ENCODE measurements at regions of chr13 and their contacts with region 1.

Region 1: DNA sequence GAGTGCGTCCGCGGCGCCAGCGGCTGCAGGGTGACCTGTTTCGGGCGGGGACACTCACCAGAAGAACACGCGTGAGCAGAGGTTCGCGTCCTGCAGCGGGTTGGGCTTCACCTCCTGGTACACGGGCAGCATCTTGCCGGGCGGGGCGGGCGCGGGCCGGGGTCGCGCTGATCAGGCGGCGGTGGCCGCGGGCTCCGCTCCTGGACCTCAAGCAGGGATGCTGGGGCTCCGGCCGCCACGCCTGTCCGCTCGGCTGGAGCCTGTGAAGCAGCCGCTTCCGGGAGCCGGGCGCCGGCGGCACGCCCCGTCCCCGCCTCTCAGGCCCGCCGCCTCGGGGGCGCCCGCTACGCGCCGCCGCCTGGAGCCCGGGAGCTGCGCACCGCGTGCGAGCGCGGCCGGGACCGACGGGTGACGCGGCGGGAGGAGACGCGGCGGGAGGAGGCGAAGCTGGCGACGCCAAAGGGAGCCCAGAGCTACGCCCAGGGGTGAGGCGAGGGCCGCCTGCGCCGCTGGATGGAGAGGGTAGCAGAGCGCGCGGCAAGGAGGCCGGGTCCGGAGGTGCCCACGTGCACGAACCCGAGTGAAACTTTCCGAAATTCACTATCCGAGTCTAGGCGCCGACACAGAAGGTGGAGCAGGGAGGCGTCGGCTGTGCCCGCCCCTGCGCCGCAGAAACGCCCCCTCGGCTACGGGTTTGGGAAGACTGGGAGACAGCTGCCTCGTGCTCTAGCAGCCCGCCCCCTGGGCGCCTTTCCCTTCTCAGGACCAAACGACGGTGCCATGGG is at the start of gene ABCC4:
- DNase-seq: peak; percentile 72
- H3K4me3 ChIP-seq: peak within 1 kb of the TSS; percentile 73 to 91 (median 83)
- H3K27ac ChIP-seq: peak within 1 kb of the TSS; percentile 84
- H3K4me1 ChIP-seq: peaks cover 18% of the 10 kb centered on the region
- H3K27me3 ChIP-seq: no peaks in the 10 kb centered on the region
- CTCF ChIP-seq: peak in 1 of 2 donors; percentile 8
- POLR2A ChIP-seq: peak; percentile 21
- total RNA-seq, gene ABCC4: 14.7 and 15.9 TPM in 2 replicates

Region 2: DNA sequence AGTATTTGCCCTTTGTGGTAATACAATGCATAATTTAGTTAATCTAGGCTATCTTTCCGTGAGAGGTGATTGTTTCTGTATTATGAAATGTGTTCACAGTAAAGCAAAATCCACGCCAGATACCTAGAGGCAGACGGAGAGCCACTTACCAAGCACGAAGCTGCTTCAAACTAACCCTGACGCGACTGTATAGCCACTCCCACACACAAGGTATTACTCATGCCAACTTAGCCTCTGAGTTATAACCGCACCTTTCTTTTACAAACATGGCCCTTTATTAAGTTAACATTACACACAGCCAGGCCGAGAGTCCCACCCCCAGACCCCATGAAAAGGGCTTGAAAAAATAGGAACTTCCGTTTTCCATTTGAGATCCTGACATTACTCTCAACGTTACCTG is 185.8 kb before region 1 on chr13:
- CTCF ChIA-PET with region 1: no interaction called
- POLR2A ChIA-PET with region 1: no interaction called
- dilution Hi-C with region 1: no loop called
- intact Hi-C with region 1: no loop called
- DNase-seq: no peak
- H3K4me3 ChIP-seq: peak overlapping the region in 1 of 3 experiments; percentile 13
- H3K27ac ChIP-seq: peak overlapping the region; percentile 65
- H3K4me1 ChIP-seq: peaks cover 43% of the 10 kb centered on the region
- H3K27me3 ChIP-seq: no peaks in the 10 kb centered on the region
- CTCF ChIP-seq: no peak
- POLR2A ChIP-seq: no peak

Region 3: DNA sequence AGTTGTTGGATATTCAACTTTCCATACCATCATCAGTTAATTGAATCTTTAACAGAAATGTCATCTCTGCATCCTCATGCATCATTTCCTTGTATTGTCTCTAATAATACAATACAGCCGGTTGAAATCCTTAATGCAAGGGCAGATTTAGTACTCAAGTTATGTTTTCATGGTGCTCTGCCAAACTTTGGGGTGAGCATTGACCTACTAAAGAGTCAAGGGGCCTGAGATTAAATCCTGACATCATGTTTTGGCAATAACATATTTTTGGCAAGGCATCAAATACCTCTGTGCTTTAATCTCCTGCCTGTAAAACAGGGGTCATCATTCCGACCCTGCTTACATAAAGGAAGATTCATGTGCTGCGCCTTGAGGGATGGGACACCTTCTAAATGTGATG is 42.6 kb after region 1 on chr13:
- CTCF ChIA-PET with region 1: interaction called, 5 read pairs
- POLR2A ChIA-PET with region 1: no interaction called
- dilution Hi-C with region 1: no loop called
- intact Hi-C with region 1: loop called (anchors 1 kb)
- DNase-seq: peak; percentile 97
- H3K4me3 ChIP-seq: no peak overlapping the region
- H3K27ac ChIP-seq: peak overlapping the region; percentile 55
- H3K4me1 ChIP-seq: peaks cover 4% of the 10 kb centered on the region
- H3K27me3 ChIP-seq: peaks cover 0 to 2% of the 10 kb centered on the region in 2 experiments
- CTCF ChIP-seq: no peak
- POLR2A ChIP-seq: peak; percentile 33

Region 4: DNA sequence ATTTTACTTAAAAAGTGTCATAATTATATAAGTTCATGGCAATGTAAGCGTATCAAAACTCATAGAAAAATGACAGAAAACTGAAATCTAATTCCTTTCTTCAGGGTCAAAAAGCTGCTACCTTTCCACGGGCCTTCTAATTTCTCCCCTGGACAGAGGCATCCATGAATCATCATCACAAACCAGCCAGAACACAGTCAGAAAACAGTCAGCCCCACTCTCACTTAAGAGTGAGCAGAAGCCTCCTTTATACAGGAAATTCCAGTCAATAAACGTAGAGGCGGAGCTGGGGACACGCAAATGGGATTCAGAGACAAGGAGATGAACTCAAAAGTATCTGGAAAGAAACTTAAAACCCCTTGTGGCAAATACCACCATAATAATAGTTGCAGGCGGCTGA is 54.1 kb after region 1 on chr13:
- CTCF ChIA-PET with region 1: interaction called, 11 read pairs
- POLR2A ChIA-PET with region 1: no interaction called
- dilution Hi-C with region 1: no loop called
- intact Hi-C with region 1: no loop called
- DNase-seq: peak; percentile 60
- H3K4me3 ChIP-seq: no peak overlapping the region
- H3K27ac ChIP-seq: no peak overlapping the region
- H3K4me1 ChIP-seq: peaks cover 12% of the 10 kb centered on the region
- H3K27me3 ChIP-seq: peaks cover 6 to 11% of the 10 kb centered on the region in 2 experiments
- CTCF ChIP-seq: no peak
- POLR2A ChIP-seq: no peak

Region 5: DNA sequence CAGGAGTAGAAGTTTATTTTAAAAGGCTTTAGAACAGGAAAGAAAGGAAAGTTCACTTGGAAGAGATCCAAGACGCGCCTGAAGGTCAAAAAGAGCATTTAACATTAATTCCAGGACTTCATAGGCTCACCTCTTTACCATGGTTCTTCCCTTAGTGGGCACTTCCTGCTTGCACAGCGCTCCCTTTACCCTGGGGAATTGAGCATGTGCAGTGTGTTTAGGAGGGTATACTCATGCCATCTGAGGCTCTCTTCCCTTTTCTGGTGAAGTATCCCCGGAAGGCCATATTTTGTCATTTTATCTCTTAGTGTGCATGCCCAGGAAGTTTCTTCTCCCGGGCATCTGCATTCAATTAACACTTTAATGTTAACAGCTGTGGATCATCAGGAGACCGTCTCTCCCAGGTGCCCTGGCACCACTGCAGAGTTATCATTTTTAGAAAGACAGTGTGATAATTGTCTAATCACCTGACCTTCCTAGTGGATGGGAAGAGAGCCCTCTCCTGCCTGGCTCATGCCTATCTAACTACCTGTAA is 66.0 kb after region 1 on chr13:
- CTCF ChIA-PET with region 1: interaction called, 10 read pairs
- POLR2A ChIA-PET with region 1: no interaction called
- dilution Hi-C with region 1: no loop called
- intact Hi-C with region 1: no loop called
- DNase-seq: no peak
- H3K4me3 ChIP-seq: no peak overlapping the region
- H3K27ac ChIP-seq: no peak overlapping the region
- H3K4me1 ChIP-seq: no peaks in the 10 kb centered on the region
- H3K27me3 ChIP-seq: peaks cover 0 to 1% of the 10 kb centered on the region in 2 experiments
- CTCF ChIP-seq: no peak
- POLR2A ChIP-seq: no peak

Region 6: GRCh38 chr13:95378603-95379002 is 77.2 kb after region 1 on chr13:
- CTCF ChIA-PET with region 1: interaction called, 260 read pairs
- POLR2A ChIA-PET with region 1: interaction called, 5 read pairs
- dilution Hi-C with region 1: no loop called
- intact Hi-C with region 1: loop called (anchors 1 kb)
- DNase-seq: no peak
- H3K4me3 ChIP-seq: no peak overlapping the region
- H3K27ac ChIP-seq: no peak overlapping the region
- H3K4me1 ChIP-seq: peaks cover 3% of the 10 kb centered on the region
- H3K27me3 ChIP-seq: peaks cover 2 to 6% of the 10 kb centered on the region in 2 experiments
- CTCF ChIP-seq: no peak
- POLR2A ChIP-seq: no peak

Region 7: GRCh38 chr13:95480131-95480545 is 178.8 kb after region 1 on chr13:
- CTCF ChIA-PET with region 1: interaction called, 3 read pairs
- POLR2A ChIA-PET with region 1: no interaction called
- dilution Hi-C with region 1: no loop called
- intact Hi-C with region 1: loop called (anchors 5 kb)
- DNase-seq: peak; percentile 65
- H3K4me3 ChIP-seq: no peak overlapping the region
- H3K27ac ChIP-seq: no peak overlapping the region
- H3K4me1 ChIP-seq: peaks cover 22% of the 10 kb centered on the region
- H3K27me3 ChIP-seq: no peaks in the 10 kb centered on the region
- CTCF ChIP-seq: no peak
- POLR2A ChIP-seq: no peak